Heart right ventricle (tissue), 16 donors: ENCODE measurements at regions of chrX and their contacts with region 1.

Region 1: GRCh38 chrX:114959729-114960128 is 57.7 kb downstream of the IL13RA2 start:
- DNase-seq: no peak
- ATAC-seq: no peak
- H3K4me3 ChIP-seq: no peak overlapping the region
- H3K27ac ChIP-seq: no peak overlapping the region
- H3K4me1 ChIP-seq: no peaks in the 10 kb centered on the region
- H3K27me3 ChIP-seq: peaks cover 0 to 21% (median 0%) of the 10 kb centered on the region in 7 donors
- CTCF ChIP-seq: peak in 7 of 9 donors; percentile 44 to 64 (median 55)

Region 2: GRCh38 chrX:114611018-114611619 is 348.6 kb before region 1 on chrX:
- intact Hi-C with region 1: loop called in 1 of 10 experiments (anchors 5 kb)
- DNase-seq: peak in 1 of 2 donors; percentile 3
- ATAC-seq: no peak
- H3K4me3 ChIP-seq: no peak overlapping the region
- H3K27ac ChIP-seq: no peak overlapping the region
- H3K4me1 ChIP-seq: no peaks in the 10 kb centered on the region
- H3K27me3 ChIP-seq: peaks cover 0 to 23% (median 0%) of the 10 kb centered on the region in 7 donors
- CTCF ChIP-seq: peak; percentile 40 to 81 (median 67)

Region 3: GRCh38 chrX:114619874-114620273 is 339.9 kb before region 1 on chrX:
- intact Hi-C with region 1: loop called in 7 of 10 experiments (anchors 5 to 10 kb)
- DNase-seq: no peak
- ATAC-seq: no peak
- H3K4me3 ChIP-seq: no peak overlapping the region
- H3K27ac ChIP-seq: no peak overlapping the region
- H3K4me1 ChIP-seq: no peaks in the 10 kb centered on the region
- H3K27me3 ChIP-seq: peaks cover 0 to 30% (median 0%) of the 10 kb centered on the region in 7 donors
- CTCF ChIP-seq: peak in 6 of 9 donors; percentile 10 to 48 (median 32)

Region 4: DNA sequence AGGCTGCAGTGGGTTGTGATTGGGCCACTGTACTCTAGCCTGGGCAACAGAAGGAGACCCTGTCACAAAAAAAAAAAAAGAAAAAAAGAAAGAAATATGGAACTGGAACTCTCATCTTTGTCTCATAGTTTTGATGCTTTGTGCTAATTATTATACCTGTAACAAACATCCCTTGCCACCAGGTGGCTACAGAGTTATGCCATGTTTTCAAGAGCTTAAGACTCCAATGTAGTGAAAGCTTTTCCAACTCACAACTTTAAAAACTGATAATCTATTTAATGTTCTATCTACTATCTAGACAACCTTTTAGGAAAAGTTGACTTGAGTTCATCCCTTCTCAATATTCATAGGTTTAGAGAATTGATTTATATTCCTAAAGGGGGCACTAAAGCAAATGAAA is 333.4 kb before region 1 on chrX:
- intact Hi-C with region 1: loop called in 7 of 10 experiments (anchors 5 to 10 kb)
- DNase-seq: no peak
- ATAC-seq: no peak
- H3K4me3 ChIP-seq: no peak overlapping the region
- H3K27ac ChIP-seq: no peak overlapping the region
- H3K4me1 ChIP-seq: no peaks in the 10 kb centered on the region
- H3K27me3 ChIP-seq: peaks cover 0 to 30% (median 0%) of the 10 kb centered on the region in 7 donors
- CTCF ChIP-seq: peak in 7 of 9 donors; percentile 20 to 56 (median 37)

Region 5: GRCh38 chrX:114774691-114775090 is 185.0 kb before region 1 on chrX:
- intact Hi-C with region 1: loop called in 1 of 10 experiments (anchors 10 kb)
- DNase-seq: no peak
- ATAC-seq: no peak
- H3K4me3 ChIP-seq: no peak overlapping the region
- H3K27ac ChIP-seq: no peak overlapping the region
- H3K4me1 ChIP-seq: no peaks in the 10 kb centered on the region
- H3K27me3 ChIP-seq: peaks cover 0 to 5% (median 0%) of the 10 kb centered on the region in 7 donors
- CTCF ChIP-seq: peak in 4 of 9 donors; percentile 9 to 20 (median 16)

Region 6: GRCh38 chrX:114905251-114905650 is 54.5 kb before region 1 on chrX:
- intact Hi-C with region 1: loop called in 1 of 10 experiments (anchors 2 kb)
- DNase-seq: no peak
- ATAC-seq: no peak
- H3K4me3 ChIP-seq: no peak overlapping the region
- H3K27ac ChIP-seq: no peak overlapping the region
- H3K4me1 ChIP-seq: no peaks in the 10 kb centered on the region
- H3K27me3 ChIP-seq: peaks cover 0 to 22% (median 0%) of the 10 kb centered on the region in 7 donors
- CTCF ChIP-seq: no peak